ENCODE measurements at regions of chr2 and their contacts with region 1.

Region 1: DNA sequence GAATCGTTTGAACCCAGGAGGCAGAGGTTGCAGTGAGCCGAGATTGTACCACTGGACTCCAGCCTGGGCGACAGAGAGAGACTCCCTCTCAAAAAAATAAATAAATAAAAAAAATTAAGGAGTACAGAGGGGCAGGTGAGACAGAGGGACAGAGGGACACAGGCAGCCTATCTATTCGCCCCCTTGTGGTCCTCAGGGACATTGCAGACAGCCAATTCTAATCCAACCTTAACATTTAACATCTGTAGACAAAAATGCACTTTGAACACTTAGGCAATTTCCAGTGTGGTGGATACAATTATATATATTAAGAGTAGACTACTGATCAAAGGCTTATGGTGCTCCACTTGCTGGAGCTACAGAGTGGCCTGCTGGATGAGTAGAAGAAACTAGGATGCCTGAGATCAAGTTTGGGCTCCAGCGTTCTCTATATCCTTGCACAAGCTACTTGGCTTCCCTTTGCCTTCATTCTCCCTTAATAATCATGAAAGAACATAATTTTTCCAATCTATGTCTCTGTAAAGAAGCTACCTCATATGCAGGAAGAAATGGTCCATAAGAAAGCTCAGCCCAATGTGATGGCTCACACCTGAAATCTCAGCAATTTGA is 8.2 kb upstream of the SMARCAL1 start:
- DNase-seq: peak; percentile 32 to 76
- ATAC-seq: peak; percentile 61 to 87 (median 85)
- H3K4me3 ChIP-seq: no peak overlapping the region
- H3K4me3 Mint-ChIP-seq: no peak overlapping the region
- H3K27ac ChIP-seq: no peak overlapping the region
- H3K27ac Mint-ChIP-seq: no peak overlapping the region
- H3K4me1 ChIP-seq: no peaks in the 10 kb centered on the region
- H3K4me1 Mint-ChIP-seq: no peaks in the 10 kb centered on the region
- H3K27me3 ChIP-seq: no peaks in the 10 kb centered on the region
- H3K27me3 Mint-ChIP-seq: peaks cover 0 to 6% of the 10 kb centered on the region in 2 donors
- CTCF ChIP-seq: peak; percentile 92

Region 2: DNA sequence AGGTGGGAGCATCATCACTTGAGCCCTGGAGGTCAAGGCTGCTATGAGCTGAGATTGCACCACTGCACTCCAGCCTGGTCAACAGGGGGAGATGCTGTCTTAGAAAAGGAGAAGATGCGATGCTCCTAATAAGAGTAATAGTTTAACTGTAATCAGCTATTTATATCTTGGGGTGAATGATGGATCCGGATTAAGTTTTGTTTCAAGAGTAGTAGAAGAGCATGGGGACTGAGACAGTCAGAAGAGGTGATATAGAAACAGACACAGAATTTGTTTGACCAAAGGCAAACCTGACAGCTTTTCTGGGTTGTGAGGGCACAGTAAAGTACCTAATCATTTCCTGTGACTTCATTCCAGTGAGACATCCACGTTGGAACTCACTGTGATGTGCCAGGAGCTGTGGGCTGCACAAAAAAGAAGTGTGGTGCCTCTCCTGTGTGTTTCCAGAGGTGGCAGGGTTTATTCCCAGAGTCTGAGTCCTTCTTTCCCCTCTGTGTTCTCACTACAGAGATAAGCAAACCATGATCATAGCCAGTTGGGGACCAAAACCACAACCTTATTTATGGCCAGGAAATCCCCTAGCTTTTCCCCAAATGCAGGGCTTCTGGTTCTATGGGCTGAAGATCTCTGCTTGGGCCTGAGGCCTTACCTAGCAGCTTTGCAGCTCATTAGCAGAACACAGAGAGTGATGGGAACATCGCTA is 181.3 kb before region 1 on chr2:
- intact Hi-C with region 1: loop called (anchors 2 kb)
- DNase-seq: peak in 1 of 2 donors; percentile 37
- ATAC-seq: peak in 2 of 3 donors; percentile 39 to 54
- H3K4me3 ChIP-seq: no peak overlapping the region
- H3K4me3 Mint-ChIP-seq: no peak overlapping the region
- H3K27ac ChIP-seq: no peak overlapping the region
- H3K27ac Mint-ChIP-seq: no peak overlapping the region
- H3K4me1 ChIP-seq: peaks cover 30% of the 10 kb centered on the region
- H3K4me1 Mint-ChIP-seq: peaks cover 35 to 45% of the 10 kb centered on the region in 2 donors
- H3K27me3 ChIP-seq: no peaks in the 10 kb centered on the region
- H3K27me3 Mint-ChIP-seq: no peaks in the 10 kb centered on the region
- CTCF ChIP-seq: no peak

Region 3: GRCh38 chr2:216328347-216328746 is 75.8 kb before region 1 on chr2:
- intact Hi-C with region 1: loop called (anchors 1 kb)
- DNase-seq: peak in 1 of 2 donors; percentile 53
- ATAC-seq: peak in 2 of 3 donors; percentile 49 to 50
- H3K4me3 ChIP-seq: no peak overlapping the region
- H3K4me3 Mint-ChIP-seq: no peak overlapping the region
- H3K27ac ChIP-seq: no peak overlapping the region
- H3K27ac Mint-ChIP-seq: no peak overlapping the region
- H3K4me1 ChIP-seq: no peaks in the 10 kb centered on the region
- H3K4me1 Mint-ChIP-seq: peaks cover 0 to 5% of the 10 kb centered on the region in 2 donors
- H3K27me3 ChIP-seq: no peaks in the 10 kb centered on the region
- H3K27me3 Mint-ChIP-seq: peaks cover 3 to 8% of the 10 kb centered on the region in 2 donors
- CTCF ChIP-seq: no peak

Region 4: GRCh38 chr2:216350214-216350789 is 53.8 kb before region 1 on chr2:
- intact Hi-C with region 1: loop called (anchors 5 kb)
- DNase-seq: peak; percentile 47 to 65
- ATAC-seq: peak; percentile 75 to 80 (median 76)
- H3K4me3 ChIP-seq: no peak overlapping the region
- H3K4me3 Mint-ChIP-seq: peak overlapping the region; percentile 80
- H3K27ac ChIP-seq: peak overlapping the region; percentile 63
- H3K27ac Mint-ChIP-seq: peak overlapping the region; percentile 86 to 95
- H3K4me1 ChIP-seq: peaks cover 58% of the 10 kb centered on the region
- H3K4me1 Mint-ChIP-seq: peaks cover 74 to 78% of the 10 kb centered on the region in 2 donors
- H3K27me3 ChIP-seq: no peaks in the 10 kb centered on the region
- H3K27me3 Mint-ChIP-seq: no peaks in the 10 kb centered on the region
- CTCF ChIP-seq: no peak

Measured in natural killer cell (primary cell).